PC-3 (cell line): ENCODE measurements at regions of chr6 and their contacts with region 1.

Region 1: GRCh38 chr6:2791124-2791974 is 26.2 kb downstream of the WRNIP1 start:
- DNase-seq: peak; percentile 93
- ATAC-seq: peak; percentile 80
- H3K4me3 ChIP-seq: no peak overlapping the region
- H3K27ac ChIP-seq: peak overlapping the region; percentile 98
- H3K4me1 ChIP-seq: peaks cover 59% of the 10 kb centered on the region
- H3K27me3 ChIP-seq: no peaks in the 10 kb centered on the region
- CTCF ChIP-seq: peak; percentile 92

Region 2: DNA sequence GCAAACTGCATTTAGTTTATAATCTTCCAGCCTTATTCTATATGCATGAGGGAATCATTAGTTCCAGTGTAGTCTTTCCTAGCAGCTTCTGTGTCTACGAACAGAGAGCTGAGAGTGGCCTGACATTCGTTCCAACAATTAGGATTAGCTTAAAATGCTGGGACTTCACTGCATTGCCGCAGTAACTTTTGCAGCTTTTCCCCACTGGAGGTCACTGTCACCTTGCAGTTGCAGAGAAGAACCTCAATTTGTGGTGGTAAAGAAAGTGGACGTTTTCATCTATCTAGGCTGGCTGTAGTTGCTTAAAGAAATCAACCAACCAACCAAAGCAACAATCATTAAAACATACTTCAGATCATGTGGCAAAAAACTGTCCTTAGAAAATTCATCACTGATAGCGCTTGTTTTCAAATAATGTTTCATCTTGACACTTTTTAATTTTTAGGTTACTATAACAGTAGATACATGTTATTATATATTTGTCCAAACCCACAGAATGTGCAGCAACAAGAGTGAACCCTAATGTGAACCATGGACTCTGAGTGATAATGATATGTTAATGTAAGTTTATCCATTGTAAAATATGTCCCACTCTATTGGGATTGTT is 52.9 kb before region 1 on chr6:
- CTCF ChIA-PET with region 1: no interaction called
- POLR2A ChIA-PET with region 1: no interaction called
- intact Hi-C with region 1: loop called (anchors 2 kb)
- DNase-seq: peak; percentile 80
- ATAC-seq: peak; percentile 84
- H3K4me3 ChIP-seq: no peak overlapping the region
- H3K27ac ChIP-seq: no peak overlapping the region
- H3K4me1 ChIP-seq: peaks cover 5% of the 10 kb centered on the region; the same call in 1 of the 2 replicates
- H3K27me3 ChIP-seq: no peaks in the 10 kb centered on the region
- CTCF ChIP-seq: peak; percentile 95

Region 3: DNA sequence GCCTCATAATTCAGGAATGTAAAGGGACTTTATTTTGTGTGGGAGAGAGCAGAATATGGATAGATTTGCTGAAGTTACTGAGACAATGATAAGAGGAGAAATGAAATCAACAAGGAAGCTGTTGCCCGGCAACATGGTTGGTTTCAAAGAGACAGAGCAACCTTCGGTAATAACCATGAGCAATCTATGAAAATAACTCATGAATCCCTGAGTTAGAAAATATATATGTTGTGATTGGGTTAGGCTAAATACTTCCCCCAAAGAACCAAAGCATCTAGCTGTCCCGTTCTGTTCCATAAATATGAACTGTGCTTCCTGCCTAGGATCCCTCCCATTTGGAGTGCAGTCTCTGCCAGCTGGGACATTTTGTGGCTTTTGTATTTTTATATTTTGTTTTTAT is 27.2 kb after region 1 on chr6:
- CTCF ChIA-PET with region 1: interaction called, 11 read pairs
- POLR2A ChIA-PET with region 1: interaction called, 9 read pairs
- intact Hi-C with region 1: loop called (anchors 1 kb)
- DNase-seq: peak; percentile 58
- ATAC-seq: peak; percentile 16
- H3K4me3 ChIP-seq: peak overlapping the region; percentile 56
- H3K27ac ChIP-seq: peak overlapping the region; percentile 99
- H3K4me1 ChIP-seq: peaks cover 62% of the 10 kb centered on the region
- H3K27me3 ChIP-seq: no peaks in the 10 kb centered on the region
- CTCF ChIP-seq: no peak

Region 4: DNA sequence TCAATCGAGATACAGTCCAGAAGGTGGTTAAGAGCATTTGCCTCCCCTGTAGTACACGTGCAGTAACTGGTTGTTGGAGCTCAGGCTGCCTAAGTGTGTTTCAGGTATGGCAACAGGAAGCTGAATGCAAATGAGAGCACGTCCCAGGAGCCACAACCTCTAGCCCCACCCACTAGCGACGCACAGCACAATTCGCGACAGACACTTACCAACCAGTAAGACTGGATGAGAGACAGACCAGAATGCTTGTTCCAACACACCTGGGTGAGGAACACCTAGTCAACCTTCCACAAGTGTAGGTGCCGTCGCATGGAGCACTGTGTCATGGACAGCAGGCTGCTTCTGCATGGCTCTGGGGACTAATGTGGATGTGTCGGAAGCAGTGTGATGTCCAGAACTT is 57.5 kb after region 1 on chr6:
- CTCF ChIA-PET with region 1: interaction called, 26 read pairs
- POLR2A ChIA-PET with region 1: interaction called, 3 read pairs
- intact Hi-C with region 1: loop called (anchors 1 kb)
- DNase-seq: no peak
- ATAC-seq: no peak
- H3K4me3 ChIP-seq: no peak overlapping the region
- H3K27ac ChIP-seq: no peak overlapping the region
- H3K4me1 ChIP-seq: peaks cover 33% of the 10 kb centered on the region
- H3K27me3 ChIP-seq: no peaks in the 10 kb centered on the region
- CTCF ChIP-seq: no peak

Region 5: GRCh38 chr6:2911171-2911570 is 119.8 kb after region 1 on chr6:
- CTCF ChIA-PET with region 1: interaction called, 5 read pairs
- POLR2A ChIA-PET with region 1: interaction called, 4 read pairs
- intact Hi-C with region 1: loop called (anchors 1 kb)
- DNase-seq: no peak
- ATAC-seq: no peak
- H3K4me3 ChIP-seq: no peak overlapping the region
- H3K27ac ChIP-seq: no peak overlapping the region
- H3K4me1 ChIP-seq: 0 out of 2 replicates have a peak, but pooled peaks cover 3% of the 10 kb centered on the region
- H3K27me3 ChIP-seq: no peaks in the 10 kb centered on the region
- CTCF ChIP-seq: no peak